ENCODE measurements at regions of chr7 and their contacts with region 1.

Region 1: DNA sequence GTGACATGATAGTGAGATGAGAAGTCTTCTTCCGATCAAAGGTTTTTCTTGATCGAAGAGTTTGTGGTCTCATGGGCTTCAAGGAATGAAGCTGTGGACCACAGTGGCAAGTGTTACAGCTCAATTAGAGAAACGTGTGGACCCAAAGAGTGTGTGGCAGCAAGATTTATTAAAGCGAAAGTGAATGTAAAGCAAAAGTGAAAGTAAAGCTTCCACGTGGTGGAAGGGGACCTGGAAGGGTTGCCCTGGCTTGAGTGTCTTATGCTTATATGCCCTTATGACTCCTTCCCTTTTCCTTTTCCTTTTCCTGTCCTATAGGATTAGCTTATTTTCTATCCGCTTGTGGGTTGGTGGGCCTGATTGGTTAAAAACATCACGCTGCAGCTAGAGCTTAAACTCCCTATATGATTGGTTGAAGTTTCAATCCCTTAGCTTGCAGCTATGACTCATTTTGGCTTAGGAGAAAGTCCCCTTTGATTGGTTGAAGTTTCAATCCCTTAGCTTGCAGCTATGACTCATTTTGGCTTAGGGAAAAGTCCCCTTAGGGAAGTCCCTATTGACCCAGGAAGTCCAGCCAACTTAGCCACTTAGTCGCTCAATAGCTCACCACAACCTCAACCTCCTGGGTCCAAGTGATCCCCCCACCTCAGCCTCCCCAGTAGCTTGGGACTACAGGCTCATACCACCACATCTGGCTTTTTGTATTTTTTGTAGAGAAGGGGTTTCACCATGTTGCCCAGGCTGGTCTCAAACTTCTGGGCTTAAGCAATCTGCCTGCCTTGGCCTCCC is 34.7 kb downstream of the MRPS24 start:
- DNase-seq: no peak
- H3K4me3 ChIP-seq: no peak overlapping the region
- H3K27ac ChIP-seq: no peak overlapping the region
- H3K4me1 ChIP-seq: no peaks in the 10 kb centered on the region
- H3K27me3 ChIP-seq: no peaks in the 10 kb centered on the region
- CTCF ChIP-seq: no peak
- EP300 ChIP-seq: no peak
- POLR2A ChIP-seq: no peak

Region 2: DNA sequence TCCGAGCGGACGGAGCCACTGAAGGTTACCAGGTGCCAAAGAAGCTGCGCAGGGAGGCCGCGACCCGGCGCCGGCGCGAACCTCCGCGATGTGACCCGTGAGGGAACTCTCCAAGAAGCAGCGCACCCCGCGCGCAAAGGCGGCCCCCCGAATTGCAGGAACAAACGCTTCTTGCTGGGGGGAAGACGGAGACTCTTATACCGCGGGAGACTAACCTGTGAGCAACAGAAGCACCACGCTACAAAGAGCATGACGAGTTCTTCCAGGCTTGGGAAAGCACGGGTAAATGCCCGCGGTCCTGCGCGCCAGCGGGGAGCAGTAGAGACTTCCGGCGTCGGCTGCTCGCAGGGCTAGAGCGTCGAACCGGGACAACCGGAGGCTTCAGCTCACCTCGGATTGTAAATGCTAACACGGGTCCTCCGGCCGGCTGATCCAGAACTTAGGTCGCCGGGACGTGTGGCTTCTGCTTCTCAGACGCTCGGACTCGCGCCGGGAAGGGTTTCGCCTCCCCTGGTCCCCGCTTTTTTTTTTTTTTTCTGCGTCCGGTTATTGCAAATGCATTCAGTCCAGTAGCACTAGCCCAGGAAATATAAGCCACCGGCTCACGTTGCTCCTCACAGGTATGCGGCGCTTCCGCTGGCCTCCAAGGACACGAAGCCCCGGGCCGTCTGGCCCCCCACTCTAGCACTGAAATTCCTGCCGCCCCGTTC is 105.3 kb before region 1 on chr7 and contains the start of gene COA1:
- intact Hi-C with region 1: loop called in 1 of 4 experiments (anchors 5 kb)
- DNase-seq: peak; percentile 80 to 89 (median 83)
- H3K4me3 ChIP-seq: peak within 1 kb of the TSS; percentile 75
- H3K27ac ChIP-seq: peak within 1 kb of the TSS; percentile 46 to 54
- H3K4me1 ChIP-seq: peaks cover 3% of the 10 kb centered on the region
- H3K27me3 ChIP-seq: no peaks in the 10 kb centered on the region
- CTCF ChIP-seq: no peak
- EP300 ChIP-seq: no peak
- POLR2A ChIP-seq: peak; percentile 30
- total RNA-seq, gene COA1: 45.4 to 67.7 (median 51.8) TPM

Measured in ovary (tissue), 10 donors.